ENCODE measurements at regions of chrX and their contacts with region 1.

Region 1: GRCh38 chrX:11533211-11533651 is 132.5 kb downstream of the ARHGAP6 start:
- DNase-seq: peak; percentile 34
- CTCF ChIP-seq: peak; percentile 51

Region 2: DNA sequence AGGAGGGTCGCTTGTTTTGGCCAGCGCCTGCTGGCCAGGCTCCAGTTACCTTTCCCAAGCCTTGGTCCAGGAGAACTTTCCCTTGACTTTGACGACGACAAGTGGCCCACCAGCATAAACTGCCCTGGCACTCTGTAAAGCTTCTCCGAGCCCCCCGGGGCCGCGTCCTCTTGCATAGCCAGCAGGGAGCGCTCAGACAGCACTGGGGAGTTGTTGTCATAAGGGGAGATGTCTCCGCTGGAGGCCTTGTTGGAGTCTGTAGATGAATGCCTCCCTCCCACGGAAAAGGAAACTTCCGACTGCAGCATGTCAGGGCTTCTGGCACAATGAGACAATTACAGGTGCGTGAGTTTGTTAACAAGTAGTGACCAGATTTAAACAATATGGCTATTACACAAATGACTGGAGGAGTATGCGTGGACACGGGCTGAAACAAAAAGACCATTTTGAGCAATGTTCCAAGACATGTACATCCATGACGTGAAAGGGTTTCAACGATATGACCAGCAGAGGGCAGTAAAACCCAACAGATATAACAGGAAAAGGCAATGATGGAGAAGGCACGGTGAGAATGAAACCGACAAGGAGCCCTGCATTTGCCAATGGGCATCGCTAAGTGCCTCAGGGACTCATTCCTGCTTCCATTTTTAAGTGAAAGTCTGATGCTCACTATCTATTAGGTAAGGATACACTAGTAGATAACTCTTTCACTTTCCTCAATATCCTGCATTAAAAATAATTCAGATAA is 389.1 kb before region 1 on chrX:
- in situ Hi-C with region 1: loop called (anchors 10 kb)
- DNase-seq: peak; percentile 67
- CTCF ChIP-seq: peak; percentile 26

Region 3: DNA sequence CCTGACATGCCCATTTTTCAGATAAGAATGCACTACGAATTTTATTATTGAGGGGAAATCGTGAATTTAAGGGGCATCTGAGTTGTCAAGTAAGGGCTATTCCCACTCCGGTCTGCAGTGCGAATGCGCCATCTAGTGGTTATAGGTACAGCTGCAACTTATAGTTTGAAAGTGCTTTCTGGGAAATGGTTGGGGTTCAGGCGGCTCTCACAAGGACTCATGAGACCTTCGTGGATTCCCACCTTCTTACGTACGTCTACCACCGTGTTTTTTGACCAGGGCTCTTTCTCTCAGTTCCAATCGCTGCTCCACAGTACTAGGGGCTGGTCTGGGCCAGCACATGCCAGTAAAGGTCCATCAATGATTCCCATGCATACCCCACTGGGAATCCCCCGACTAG is 237.1 kb after region 1 on chrX:
- in situ Hi-C with region 1: loop called (anchors 10 kb)
- DNase-seq: peak; percentile 64
- CTCF ChIP-seq: peak; percentile 85

Region 4: GRCh38 chrX:11908371-11908770 is 375.1 kb after region 1 on chrX:
- in situ Hi-C with region 1: loop called (anchors 25 kb)
- DNase-seq: peak; percentile 11
- CTCF ChIP-seq: no peak

Measured in GM13976 (cell line).